Heart right ventricle (tissue), 16 donors: ENCODE measurements at regions of chr21 and their contacts with region 1.

Region 1: GRCh38 chr21:28325618-28326017 is 667.1 kb downstream of the LTN1 start:
- DNase-seq: no peak
- ATAC-seq: no peak
- H3K4me3 ChIP-seq: no peak overlapping the region
- H3K27ac ChIP-seq: no peak overlapping the region
- H3K4me1 ChIP-seq: no peaks in the 10 kb centered on the region
- H3K27me3 ChIP-seq: no peaks in the 10 kb centered on the region
- CTCF ChIP-seq: no peak

Region 2: DNA sequence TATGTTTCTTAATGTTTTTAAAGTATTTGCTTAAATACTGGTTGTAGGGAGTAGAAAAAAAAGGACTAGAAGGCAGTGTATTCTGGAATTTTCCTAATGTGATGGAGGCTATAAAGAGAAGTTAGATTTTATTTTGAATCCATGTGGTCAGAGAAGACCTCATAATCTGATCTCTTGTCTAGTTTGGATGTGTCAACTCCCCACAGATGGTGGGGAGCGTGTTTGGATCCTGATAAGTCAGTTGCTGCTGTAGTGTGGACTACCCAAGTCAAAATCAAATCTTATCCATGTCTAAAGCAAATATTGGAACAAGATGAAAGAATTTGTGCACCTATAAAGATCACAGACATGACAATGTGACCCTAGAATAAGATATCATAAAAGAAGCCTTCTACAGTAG is 250.9 kb before region 1 on chr21:
- intact Hi-C with region 1: loop called in 3 of 10 experiments (anchors 10 kb)
- DNase-seq: no peak
- ATAC-seq: no peak
- H3K4me3 ChIP-seq: no peak overlapping the region
- H3K27ac ChIP-seq: no peak overlapping the region
- H3K4me1 ChIP-seq: peaks cover 0 to 3% (median 0%) of the 10 kb centered on the region in 9 donors
- H3K27me3 ChIP-seq: no peaks in the 10 kb centered on the region
- CTCF ChIP-seq: no peak

Region 3: DNA sequence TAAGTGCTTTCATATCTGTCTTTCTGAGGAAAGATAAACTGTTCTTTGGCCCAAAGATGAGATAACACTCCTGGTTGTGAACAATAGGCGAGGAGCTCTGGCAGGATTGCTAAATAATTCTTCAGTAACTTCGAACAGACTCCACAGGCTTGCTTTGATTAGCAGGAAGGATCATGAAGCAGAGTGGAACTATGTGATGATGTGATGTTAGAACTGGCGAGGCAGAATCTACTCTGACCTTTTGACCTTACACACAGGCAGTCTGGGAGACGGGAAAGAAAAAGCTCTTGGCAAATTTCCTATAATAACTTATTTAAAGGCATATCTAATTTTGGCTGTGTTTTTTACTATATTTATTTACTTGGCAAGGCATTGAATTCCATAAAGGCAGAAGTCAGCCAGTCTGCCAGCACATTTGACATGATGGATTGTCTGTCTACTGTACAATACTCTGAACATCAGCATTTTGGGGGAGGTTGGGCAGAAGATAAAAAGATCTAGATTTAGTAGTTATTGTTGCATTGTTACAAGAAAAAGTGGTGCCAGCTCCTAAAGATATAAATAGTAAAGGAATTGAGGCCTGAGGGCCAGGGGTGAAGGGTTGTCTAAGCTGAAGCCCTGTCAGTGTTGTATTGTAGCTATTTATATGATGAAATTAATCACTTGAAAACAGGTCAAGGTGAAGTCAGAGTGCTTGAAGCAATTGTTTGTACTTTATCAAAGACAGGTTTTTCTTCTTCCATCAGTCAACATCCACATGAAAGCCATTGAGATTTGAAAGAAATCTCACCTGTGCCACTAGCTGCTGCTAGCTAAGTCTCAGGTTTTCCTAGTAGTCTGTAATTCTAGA is 41.8 kb before region 1 on chr21:
- intact Hi-C with region 1: no loop called
- DNase-seq: peak in 1 of 2 donors; percentile 20
- ATAC-seq: peak; percentile 38 to 96 (median 88)
- H3K4me3 ChIP-seq: no peak overlapping the region
- H3K27ac ChIP-seq: peak overlapping the region in 9 of 10 donors; percentile 2 to 67 (median 21)
- H3K4me1 ChIP-seq: peaks cover 4 to 21% (median 11%) of the 10 kb centered on the region in 9 donors
- H3K27me3 ChIP-seq: no peaks in the 10 kb centered on the region
- CTCF ChIP-seq: no peak